Caco-2 (cell line): ENCODE measurements at regions of chr19 and their contacts with region 1.

Region 1: GRCh38 chr19:48445606-48446481 is at the start of gene GRWD1:
- DNase-seq: peak; percentile 94 to 97
- H3K4me3 ChIP-seq: peak within 1 kb of the TSS; percentile 68
- H3K4me3 Mint-ChIP-seq: peak within 1 kb of the TSS; percentile 97
- H3K27ac Mint-ChIP-seq: peak within 1 kb of the TSS; percentile 99
- H3K4me1 ChIP-seq: peaks cover 10% of the 10 kb centered on the region
- H3K4me1 Mint-ChIP-seq: peaks cover 21% of the 10 kb centered on the region
- H3K27me3 ChIP-seq: no peaks in the 10 kb centered on the region
- H3K27me3 Mint-ChIP-seq: no peaks in the 10 kb centered on the region
- CTCF ChIP-seq: no peak
- total RNA-seq, gene GRWD1: 77.3 and 77.4 TPM in 2 replicates

Region 2: GRCh38 chr19:48321622-48322591 is 123.9 kb before region 1 on chr19:
- CTCF ChIA-PET with region 1: no interaction called
- POLR2A ChIA-PET with region 1: no interaction called
- intact Hi-C with region 1: loop called (anchors 2 kb)
- DNase-seq: peak; percentile 98 to 99
- H3K4me3 ChIP-seq: peak overlapping the region; percentile 93
- H3K4me3 Mint-ChIP-seq: peak overlapping the region; percentile 96
- H3K27ac Mint-ChIP-seq: peak overlapping the region; percentile 95
- H3K4me1 ChIP-seq: peaks cover 25% of the 10 kb centered on the region
- H3K4me1 Mint-ChIP-seq: peaks cover 34% of the 10 kb centered on the region
- H3K27me3 ChIP-seq: no peaks in the 10 kb centered on the region
- H3K27me3 Mint-ChIP-seq: no peaks in the 10 kb centered on the region
- CTCF ChIP-seq: peak in 1 of 2 experiments; percentile 15

Region 3: DNA sequence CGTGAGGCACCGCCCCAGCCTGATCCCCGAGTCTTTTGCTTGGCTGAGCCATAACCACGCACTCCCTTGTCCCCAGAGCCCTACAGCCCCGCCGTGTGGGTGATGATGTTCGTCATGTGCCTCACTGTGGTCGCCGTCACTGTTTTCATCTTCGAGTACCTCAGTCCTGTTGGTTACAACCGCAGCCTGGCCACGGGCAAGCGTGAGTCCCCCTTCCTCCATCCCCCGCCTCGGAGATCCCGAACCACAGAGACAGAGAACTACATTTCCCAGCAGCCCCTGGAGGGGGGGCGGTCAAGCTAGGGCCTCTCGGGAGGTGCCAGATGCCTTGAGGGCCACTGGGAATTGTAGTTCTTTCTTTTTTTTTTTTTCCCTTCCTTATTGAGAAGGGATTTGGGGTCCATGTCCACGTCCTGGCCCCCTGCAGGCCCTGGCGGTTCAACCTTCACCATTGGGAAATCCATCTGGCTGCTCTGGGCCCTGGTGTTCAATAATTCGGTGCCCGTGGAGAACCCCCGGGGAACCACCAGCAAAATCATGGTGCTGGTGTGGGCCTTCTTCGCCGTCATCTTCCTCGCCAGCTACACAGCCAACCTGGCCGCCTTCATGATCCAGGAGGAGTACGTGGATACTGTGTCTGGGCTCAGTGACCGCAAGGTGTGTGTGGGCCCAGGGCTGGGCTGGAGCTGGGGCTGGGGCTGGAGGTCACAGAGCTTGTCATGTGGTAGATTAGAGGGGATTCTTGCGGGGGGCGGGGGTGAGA is 26.5 kb before region 1 on chr19:
- CTCF ChIA-PET with region 1: no interaction called
- POLR2A ChIA-PET with region 1: interaction called, 3 read pairs
- intact Hi-C with region 1: loop called (anchors 2 kb)
- DNase-seq: peak; percentile 63 to 72
- H3K4me3 ChIP-seq: no peak overlapping the region
- H3K4me3 Mint-ChIP-seq: no peak overlapping the region
- H3K27ac Mint-ChIP-seq: no peak overlapping the region
- H3K4me1 ChIP-seq: peaks cover under 1% of the 10 kb centered on the region; the same call in 1 of the 2 replicates
- H3K4me1 Mint-ChIP-seq: peaks cover 5% of the 10 kb centered on the region
- H3K27me3 ChIP-seq: no peaks in the 10 kb centered on the region; the same call in 1 of the 2 replicates
- H3K27me3 Mint-ChIP-seq: no peaks in the 10 kb centered on the region
- CTCF ChIP-seq: no peak

Region 4: DNA sequence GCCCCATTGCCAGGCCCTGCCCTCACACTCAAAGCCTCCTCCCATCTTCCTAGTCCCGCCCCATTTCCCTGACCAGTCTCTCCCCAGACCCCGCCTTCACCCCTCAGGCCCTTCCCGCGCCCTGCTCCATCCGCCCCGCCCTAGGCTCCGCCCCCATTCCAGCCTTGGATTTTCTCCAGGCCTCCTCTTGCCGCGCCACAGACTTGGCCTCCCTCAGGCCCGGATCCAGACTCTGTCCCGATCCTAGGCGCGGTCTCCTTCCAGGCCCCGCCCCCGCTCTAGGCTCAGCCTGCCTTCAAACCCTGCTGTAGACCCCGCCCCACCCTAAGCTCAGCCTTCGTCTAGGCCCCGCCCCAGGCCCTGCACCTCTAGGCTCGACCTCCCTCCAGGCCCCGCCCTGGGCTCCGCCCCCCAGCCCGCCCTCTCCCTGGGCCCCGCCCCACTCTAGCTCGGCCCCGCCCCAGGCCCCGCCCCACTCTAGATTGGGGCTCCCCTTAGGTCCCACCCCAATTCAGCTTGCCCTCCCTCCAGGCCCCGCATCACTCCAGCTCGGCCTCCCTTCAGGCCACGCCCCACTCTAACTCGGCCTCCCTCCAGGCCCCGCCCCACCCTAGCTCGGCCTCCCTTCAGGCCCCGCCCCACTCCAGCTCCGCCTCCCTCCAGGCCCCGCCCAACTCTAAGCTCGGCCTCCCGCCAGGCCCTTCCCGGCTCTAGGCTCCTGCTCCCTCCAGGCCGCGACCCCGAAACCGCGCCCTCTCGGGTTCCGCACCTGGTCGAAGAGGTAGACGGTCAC is 47.3 kb after region 1 on chr19:
- CTCF ChIA-PET with region 1: interaction called, 3 read pairs
- POLR2A ChIA-PET with region 1: no interaction called
- intact Hi-C with region 1: loop called (anchors 2 kb)
- DNase-seq: peak; percentile 97 to 99
- H3K4me3 ChIP-seq: peak overlapping the region; percentile 77
- H3K4me3 Mint-ChIP-seq: peak overlapping the region; percentile 64
- H3K27ac Mint-ChIP-seq: peak overlapping the region; percentile 81
- H3K4me1 ChIP-seq: peaks cover 18% of the 10 kb centered on the region
- H3K4me1 Mint-ChIP-seq: peaks cover 38% of the 10 kb centered on the region
- H3K27me3 ChIP-seq: no peaks in the 10 kb centered on the region
- H3K27me3 Mint-ChIP-seq: no peaks in the 10 kb centered on the region
- CTCF ChIP-seq: no peak

Region 5: GRCh38 chr19:48588670-48589399 is 143.0 kb after region 1 on chr19:
- CTCF ChIA-PET with region 1: interaction called, 10 read pairs
- POLR2A ChIA-PET with region 1: interaction called, 6 read pairs
- intact Hi-C with region 1: loop called (anchors 1 kb)
- DNase-seq: peak; percentile 89 to 93
- H3K4me3 ChIP-seq: peak overlapping the region; percentile 27
- H3K4me3 Mint-ChIP-seq: peak overlapping the region; percentile 79
- H3K27ac Mint-ChIP-seq: peak overlapping the region; percentile 74
- H3K4me1 ChIP-seq: peaks cover 3% of the 10 kb centered on the region
- H3K4me1 Mint-ChIP-seq: peaks cover 14% of the 10 kb centered on the region
- H3K27me3 ChIP-seq: no peaks in the 10 kb centered on the region
- H3K27me3 Mint-ChIP-seq: no peaks in the 10 kb centered on the region
- CTCF ChIP-seq: peak; percentile 95 to 97